Activated B cell treated with CpG ODN at 0.5 μM for 24 hours (primary cell): ENCODE measurements at regions of chr11 and their contacts with region 1.

Region 1: DNA sequence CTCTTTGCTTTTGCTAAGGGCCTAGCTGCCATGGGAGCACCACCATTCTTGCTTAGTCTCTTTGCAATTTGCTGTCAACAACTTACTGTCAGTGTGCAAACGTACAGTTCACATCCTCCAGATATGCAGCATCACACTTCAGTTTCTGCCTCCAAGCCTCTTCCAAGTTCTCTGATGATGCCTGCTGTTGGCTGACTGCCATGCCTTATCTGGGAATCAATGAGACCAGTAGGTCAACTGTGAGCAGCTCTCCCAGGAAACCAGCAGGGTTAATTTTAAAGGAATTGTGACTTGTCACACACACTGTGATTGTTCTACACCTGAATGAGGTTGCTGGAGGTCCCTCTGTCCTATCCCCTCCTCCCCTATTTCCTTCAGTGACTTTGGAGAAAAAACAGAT is 56.0 kb downstream of the COPB1 start:
- DNase-seq: no peak
- ATAC-seq: no peak
- H3K4me3 Mint-ChIP-seq: no peak overlapping the region
- H3K27ac Mint-ChIP-seq: no peak overlapping the region
- H3K4me1 Mint-ChIP-seq: peaks cover 30% of the 10 kb centered on the region
- H3K27me3 Mint-ChIP-seq: no peaks in the 10 kb centered on the region
- CTCF ChIP-seq: no peak

Region 2: DNA sequence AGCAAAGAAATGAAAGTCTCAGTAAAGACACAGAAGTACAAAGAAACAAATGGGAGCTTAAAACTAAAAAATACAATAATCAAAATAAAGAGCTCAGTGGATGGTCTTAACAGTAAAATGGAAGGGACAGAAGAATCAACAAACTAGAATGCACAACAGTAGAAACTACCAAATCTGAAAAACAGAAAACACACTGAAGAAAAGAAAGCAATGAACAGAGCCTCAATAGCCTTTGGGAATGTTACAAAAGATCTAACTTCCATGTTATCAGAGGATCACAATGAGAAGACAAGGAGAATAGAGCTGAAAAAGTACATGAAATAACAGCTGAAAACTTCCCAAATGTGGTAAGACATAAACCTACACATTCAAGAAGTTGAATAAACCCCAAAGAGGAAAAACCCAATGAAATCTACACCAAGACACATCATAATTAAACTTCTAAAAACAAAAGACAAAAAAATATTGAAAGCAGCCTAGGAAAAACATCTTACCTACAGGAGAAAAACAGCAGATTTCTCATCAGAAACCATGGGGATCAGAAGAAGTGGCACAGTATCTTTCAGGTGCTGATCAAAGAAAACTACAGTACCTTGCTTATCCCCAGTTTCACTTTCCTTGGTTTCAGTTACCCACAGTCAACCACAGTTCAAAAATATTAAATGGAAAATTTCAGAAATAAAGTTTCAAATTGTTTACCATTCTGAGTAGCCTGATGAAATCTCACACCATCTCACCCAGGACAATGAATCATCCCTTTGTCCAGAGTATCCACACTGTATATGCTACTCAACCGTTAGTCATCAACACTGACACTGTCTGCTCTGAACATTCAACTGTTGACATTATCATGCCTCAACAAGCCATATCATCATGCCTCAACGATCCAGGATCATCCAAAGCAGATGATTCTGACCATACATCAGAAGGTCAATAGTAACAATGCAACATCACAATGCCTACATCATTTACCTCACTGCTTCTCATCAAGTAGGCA is 106.8 kb before region 1 on chr11:
- CTCF ChIA-PET with region 1: no interaction called
- POLR2A ChIA-PET with region 1: no interaction called
- intact Hi-C with region 1: no loop called
- DNase-seq: no peak
- ATAC-seq: peak; percentile 74
- H3K4me3 Mint-ChIP-seq: peak overlapping the region; percentile 55
- H3K27ac Mint-ChIP-seq: peak overlapping the region; percentile 62
- H3K4me1 Mint-ChIP-seq: peaks cover 81% of the 10 kb centered on the region
- H3K27me3 Mint-ChIP-seq: no peaks in the 10 kb centered on the region
- CTCF ChIP-seq: no peak

Region 3: DNA sequence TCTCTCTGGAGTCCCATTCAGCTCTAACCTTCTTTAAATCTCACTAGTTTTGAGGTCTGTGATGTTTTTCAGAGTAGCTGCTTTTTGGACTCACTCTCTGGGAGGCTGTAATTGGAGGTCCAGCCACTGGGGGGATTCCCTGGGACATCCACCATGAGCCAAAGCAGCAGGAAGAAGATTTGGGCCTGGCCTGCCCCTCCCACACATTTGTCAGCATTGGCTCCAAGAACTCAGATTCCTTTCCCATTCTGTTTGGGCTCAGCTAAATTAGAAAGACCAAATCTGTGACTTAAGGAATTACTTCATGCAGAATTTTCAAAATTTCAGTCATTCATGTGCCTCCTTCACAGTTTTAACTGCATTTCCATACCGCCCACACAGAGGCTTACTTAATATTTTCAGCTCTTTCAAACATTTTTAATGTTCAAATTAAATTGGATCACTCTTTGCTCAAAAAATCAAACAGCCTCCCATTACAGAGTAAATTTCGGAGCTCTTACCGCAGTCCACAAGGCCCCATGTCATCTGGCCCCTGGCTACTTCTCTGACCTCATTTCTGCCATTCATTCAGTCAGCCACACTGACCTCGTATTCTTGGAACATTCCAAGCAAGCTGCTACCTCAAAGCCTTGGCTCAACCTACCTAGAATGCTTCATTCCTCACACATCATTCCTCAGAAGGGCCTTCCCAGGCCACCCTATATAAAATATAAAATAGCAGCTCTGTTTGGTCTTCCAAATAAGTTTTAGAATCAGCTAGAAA is 30.1 kb before region 1 on chr11:
- CTCF ChIA-PET with region 1: no interaction called
- POLR2A ChIA-PET with region 1: no interaction called
- intact Hi-C with region 1: loop called (anchors 2 kb)
- DNase-seq: no peak
- ATAC-seq: no peak
- H3K4me3 Mint-ChIP-seq: no peak overlapping the region
- H3K27ac Mint-ChIP-seq: no peak overlapping the region
- H3K4me1 Mint-ChIP-seq: peaks cover 22% of the 10 kb centered on the region
- H3K27me3 Mint-ChIP-seq: no peaks in the 10 kb centered on the region
- CTCF ChIP-seq: no peak

Region 4: GRCh38 chr11:14418803-14419417 is 24.7 kb before region 1 on chr11:
- CTCF ChIA-PET with region 1: no interaction called
- POLR2A ChIA-PET with region 1: no interaction called
- intact Hi-C with region 1: loop called (anchors 2 kb)
- DNase-seq: no peak
- ATAC-seq: no peak
- H3K4me3 Mint-ChIP-seq: no peak overlapping the region
- H3K27ac Mint-ChIP-seq: no peak overlapping the region
- H3K4me1 Mint-ChIP-seq: peaks cover 16% of the 10 kb centered on the region
- H3K27me3 Mint-ChIP-seq: no peaks in the 10 kb centered on the region
- CTCF ChIP-seq: no peak

Region 5: GRCh38 chr11:14713496-14714244 is 270.0 kb after region 1 on chr11:
- CTCF ChIA-PET with region 1: no interaction called
- POLR2A ChIA-PET with region 1: no interaction called
- intact Hi-C with region 1: no loop called
- DNase-seq: no peak
- ATAC-seq: no peak
- H3K4me3 Mint-ChIP-seq: no peak overlapping the region
- H3K27ac Mint-ChIP-seq: no peak overlapping the region
- H3K4me1 Mint-ChIP-seq: no peaks in the 10 kb centered on the region
- H3K27me3 Mint-ChIP-seq: peaks cover 10% of the 10 kb centered on the region
- CTCF ChIP-seq: no peak